Panc1 (cell line): ENCODE measurements at regions of chr21 and their contacts with region 1.

Region 1: GRCh38 chr21:45330075-45330781 is 42.5 kb upstream of the POFUT2 start:
- DNase-seq: no peak
- ATAC-seq: peak; percentile 73
- H3K4me3 ChIP-seq: peak overlapping the region in 1 of 2 experiments; percentile 24; a peak in 2 of 4 replicates
- H3K27ac ChIP-seq: peak overlapping the region; percentile 90
- H3K4me1 ChIP-seq: peaks cover 81% of the 10 kb centered on the region
- H3K27me3 ChIP-seq: no peaks in the 10 kb centered on the region
- CTCF ChIP-seq: no peak

Region 2: GRCh38 chr21:45098867-45099266 is 231.4 kb before region 1 on chr21:
- CTCF ChIA-PET with region 1: no interaction called
- POLR2A ChIA-PET with region 1: no interaction called
- in situ Hi-C with region 1: no loop called
- intact Hi-C with region 1: no loop called
- DNase-seq: no peak
- ATAC-seq: no peak
- H3K4me3 ChIP-seq: no peak overlapping the region
- H3K27ac ChIP-seq: no peak overlapping the region
- H3K4me1 ChIP-seq: peaks cover 6% of the 10 kb centered on the region; the same call in 1 of the 2 replicates
- H3K27me3 ChIP-seq: no peaks in the 10 kb centered on the region
- CTCF ChIP-seq: peak; percentile 71

Region 3: GRCh38 chr21:45404730-45405270 is 74.6 kb after region 1 on chr21 and contains the start of gene COL18A1:
- CTCF ChIA-PET with region 1: no interaction called
- POLR2A ChIA-PET with region 1: no interaction called
- in situ Hi-C with region 1: no loop called
- intact Hi-C with region 1: loop called (anchors 5 kb)
- DNase-seq: no peak
- ATAC-seq: peak; percentile 66
- H3K4me3 ChIP-seq: peak within 1 kb of the TSS; percentile 60 to 80
- H3K27ac ChIP-seq: peak within 1 kb of the TSS; percentile 96
- H3K4me1 ChIP-seq: peaks cover 27% of the 10 kb centered on the region
- H3K27me3 ChIP-seq: no peaks in the 10 kb centered on the region
- CTCF ChIP-seq: no peak
- total RNA-seq, gene COL18A1: 676 TPM

Region 4: GRCh38 chr21:45525153-45526025 is 195.2 kb after region 1 on chr21:
- CTCF ChIA-PET with region 1: no interaction called
- POLR2A ChIA-PET with region 1: no interaction called
- in situ Hi-C with region 1: no loop called
- intact Hi-C with region 1: no loop called
- DNase-seq: no peak
- ATAC-seq: no peak
- H3K4me3 ChIP-seq: no peak overlapping the region
- H3K27ac ChIP-seq: no peak overlapping the region
- H3K4me1 ChIP-seq: no peaks in the 10 kb centered on the region
- H3K27me3 ChIP-seq: no peaks in the 10 kb centered on the region
- CTCF ChIP-seq: no peak